Heart left ventricle (tissue), 16 donors: ENCODE measurements at regions of chr21 and their contacts with region 1.

Region 1: DNA sequence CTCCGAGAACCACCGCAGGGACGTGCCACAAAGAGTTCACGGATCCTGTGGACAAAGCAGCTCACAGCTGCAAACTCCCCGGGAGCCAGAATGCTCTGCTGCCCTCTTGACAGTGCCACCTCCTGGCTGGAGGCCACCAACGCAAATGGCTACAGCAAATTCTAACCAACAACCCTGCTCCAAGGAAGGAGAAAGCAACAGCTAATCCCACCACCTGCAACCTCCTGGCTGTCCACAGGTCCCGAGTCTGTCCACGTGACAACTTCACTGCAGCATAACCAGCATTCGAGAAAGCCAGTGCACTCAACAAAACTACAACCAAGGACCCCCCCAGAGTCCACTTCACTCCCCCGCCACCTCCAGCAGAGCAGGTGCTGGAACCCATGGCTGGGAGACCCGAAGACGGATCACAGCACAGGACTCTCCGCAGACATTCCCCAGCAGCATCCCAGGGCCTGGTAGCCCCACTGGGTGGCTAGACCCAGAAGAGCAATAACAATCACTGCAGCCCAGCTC is 17.3 kb downstream of the POFUT2 start:
- DNase-seq: peak in 1 of 5 donors; percentile 36
- ATAC-seq: no peak
- H3K4me3 ChIP-seq: no peak overlapping the region
- H3K27ac ChIP-seq: no peak overlapping the region
- H3K4me1 ChIP-seq: peaks cover 0 to 4% (median 0%) of the 10 kb centered on the region in 12 donors
- H3K27me3 ChIP-seq: no peaks in the 10 kb centered on the region
- CTCF ChIP-seq: peak in 1 of 12 donors; percentile 7
- POLR2A ChIP-seq: no peak

Region 2: GRCh38 chr21:44939532-44940115 is 330.7 kb before region 1 on chr21 and contains the start of gene SLX9:
- intact Hi-C with region 1: loop called in 1 of 10 experiments (anchors 10 kb)
- DNase-seq: peak; percentile 72 to 90 (median 83)
- ATAC-seq: peak; percentile 58 to 92 (median 87)
- H3K4me3 ChIP-seq: peak within 1 kb of the TSS; percentile 74 to 99 (median 82)
- H3K27ac ChIP-seq: peak within 1 kb of the TSS; percentile 9 to 88 (median 78)
- H3K4me1 ChIP-seq: peaks cover 0 to 37% (median 29%) of the 10 kb centered on the region in 12 donors
- H3K27me3 ChIP-seq: peaks cover 0 to 5% (median 0%) of the 10 kb centered on the region in 9 donors
- CTCF ChIP-seq: no peak
- POLR2A ChIP-seq: peak in 1 of 2 donors; percentile 70
- total RNA-seq, gene SLX9: 38.5 to 53.1 (median 47.1) TPM

Region 3: DNA sequence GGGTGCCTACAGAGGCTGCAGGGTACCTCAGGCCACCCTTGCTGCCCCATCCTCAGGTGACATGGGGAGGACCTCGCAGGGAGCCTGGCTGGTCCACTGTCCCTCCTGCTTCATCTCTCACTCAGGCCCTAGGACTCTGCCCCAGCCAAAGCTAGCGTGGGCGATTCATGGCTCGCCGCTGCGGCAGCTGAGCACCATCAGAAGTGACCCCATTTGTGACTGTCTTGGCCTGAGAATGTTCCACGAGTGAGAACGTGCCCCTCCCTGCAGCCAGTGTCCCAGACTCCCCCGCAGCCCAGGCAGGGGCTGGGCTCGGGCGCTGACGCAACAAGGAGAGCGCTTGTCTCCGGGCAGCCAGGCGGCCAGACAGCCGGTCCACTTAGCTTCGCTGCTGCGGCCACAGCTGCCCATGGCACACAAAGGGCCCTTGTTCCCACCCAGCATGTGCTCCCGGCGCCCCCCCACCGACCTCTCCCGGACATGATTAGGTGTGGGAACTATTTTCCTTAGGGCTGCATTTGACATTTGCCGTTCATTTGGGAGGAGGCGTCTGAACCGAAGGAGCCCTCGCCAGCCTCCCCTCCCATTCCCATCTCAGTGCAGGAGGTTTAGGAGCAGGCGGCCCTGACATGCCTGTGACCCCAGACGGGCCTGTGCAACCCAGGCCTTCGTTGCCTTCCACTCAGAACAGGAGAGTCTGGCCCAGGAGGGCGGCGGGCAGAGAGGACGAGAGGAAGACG is 36.6 kb after region 1 on chr21:
- intact Hi-C with region 1: no loop called
- DNase-seq: peak; percentile 87 to 93 (median 92)
- ATAC-seq: peak; percentile 69 to 78 (median 74)
- H3K4me3 ChIP-seq: no peak overlapping the region
- H3K27ac ChIP-seq: peak overlapping the region; percentile 54 to 95 (median 76)
- H3K4me1 ChIP-seq: peaks cover 4 to 55% (median 36%) of the 10 kb centered on the region in 12 donors
- H3K27me3 ChIP-seq: no peaks in the 10 kb centered on the region
- CTCF ChIP-seq: peak in 1 of 12 donors; percentile 5
- POLR2A ChIP-seq: no peak